Right ventricle myocardium inferior (tissue), 1 donor: ENCODE measurements at regions of chr19 and their contacts with region 1.

Region 1: GRCh38 chr19:49766007-49766937 is 529 bp upstream of the AP2A1 start:
- DNase-seq: peak; percentile 100
- ATAC-seq: peak; percentile 93

Region 2: DNA sequence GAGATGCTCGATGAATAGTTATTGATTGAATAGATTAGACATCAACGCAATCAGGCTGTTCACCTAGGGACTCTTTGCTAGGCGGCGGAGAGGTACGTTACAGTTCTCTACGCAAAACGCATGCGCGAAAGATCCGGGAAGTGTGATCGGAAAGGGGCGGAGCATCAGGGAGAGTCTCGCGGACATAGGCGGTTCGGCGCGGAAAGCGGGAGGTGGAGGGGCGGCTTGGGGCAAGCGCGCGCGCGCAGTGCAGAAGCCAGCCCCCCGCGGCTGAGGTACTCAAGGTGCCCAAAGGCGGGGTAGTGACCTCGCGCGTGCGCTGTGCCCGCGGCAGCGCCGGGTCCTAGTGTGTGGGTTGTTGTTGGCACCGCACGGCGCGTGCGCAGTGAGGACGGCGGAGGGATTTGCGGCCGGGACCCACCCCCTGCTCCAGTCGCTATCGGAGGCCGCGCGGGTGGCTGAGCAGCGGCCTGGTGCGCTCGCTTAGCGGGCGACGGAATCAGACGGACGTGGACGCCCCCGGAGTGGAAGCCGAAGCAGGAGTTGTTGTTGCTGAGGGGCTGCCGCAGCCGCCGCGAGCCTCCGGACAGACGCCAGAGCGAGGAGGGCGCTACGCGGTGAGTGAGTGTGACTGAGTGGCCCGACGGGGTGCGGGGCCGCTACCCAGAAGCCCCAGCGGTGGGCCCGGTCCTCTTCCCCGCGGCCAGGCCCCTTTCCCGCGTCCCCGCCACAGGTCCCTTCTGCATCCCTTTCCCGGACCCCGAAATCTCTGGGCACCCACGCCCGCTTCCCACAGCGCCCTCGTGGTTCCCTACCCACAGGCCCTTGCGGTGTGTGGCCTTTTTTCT is 681.0 kb before region 1 on chr19 and contains the start of gene SNRNP70:
- intact Hi-C with region 1: loop called (anchors 10 kb)
- DNase-seq: peak; percentile 100
- ATAC-seq: peak; percentile 99
- total RNA-seq, gene SNRNP70: 110 TPM

Region 3: GRCh38 chr19:49451430-49452181 is 314.7 kb before region 1 on chr19 and contains the start of gene PIH1D1:
- intact Hi-C with region 1: loop called (anchors 10 kb)
- DNase-seq: peak; percentile 98
- ATAC-seq: peak; percentile 83
- total RNA-seq, gene PIH1D1: 32.4 TPM

Region 4: GRCh38 chr19:49665351-49666119 is 100.7 kb before region 1 on chr19 and contains the starts of genes BCL2L12 and IRF3:
- intact Hi-C with region 1: no loop called
- DNase-seq: peak; percentile 99
- ATAC-seq: peak; percentile 93
- total RNA-seq, gene BCL2L12: 10.6 TPM
- total RNA-seq, gene IRF3: 36.4 TPM

Region 5: DNA sequence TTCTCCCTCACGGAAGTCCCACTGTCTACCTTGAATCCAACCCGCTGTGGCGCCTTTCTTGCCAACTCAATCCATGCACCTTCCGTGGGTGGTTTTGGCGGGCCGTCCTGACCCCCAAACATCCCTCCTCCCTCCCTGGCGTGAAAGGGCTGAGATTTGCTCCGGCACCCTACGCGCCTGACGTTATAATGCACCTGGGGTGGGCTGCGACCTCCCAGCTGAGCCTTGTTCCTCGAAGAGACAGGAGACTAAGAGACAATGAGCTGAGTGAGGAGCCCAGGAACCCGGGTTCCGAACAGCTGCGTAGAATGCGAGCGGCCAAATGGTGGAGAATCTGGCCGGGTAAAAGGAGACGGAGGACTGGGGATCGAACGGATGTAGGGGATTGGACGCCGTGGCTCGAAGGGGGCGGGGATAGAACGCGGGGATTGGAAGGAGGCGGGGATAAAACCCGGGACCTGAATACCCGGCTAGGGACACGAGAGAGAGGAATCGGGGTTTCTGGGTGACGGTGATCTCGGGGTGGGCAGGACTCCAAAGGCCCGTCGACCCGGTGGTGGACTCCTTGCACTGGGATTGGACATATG is 75.5 kb before region 1 on chr19 and contains the start of gene CPT1C:
- intact Hi-C with region 1: loop called (anchors 5 kb)
- DNase-seq: peak; percentile 87
- ATAC-seq: peak; percentile 83
- total RNA-seq, gene CPT1C: 2.9 TPM

Region 6: GRCh38 chr19:49817964-49818648 is 51.8 kb after region 1 on chr19 and contains the start of gene MED25:
- intact Hi-C with region 1: loop called (anchors 1 kb)
- DNase-seq: peak; percentile 95
- ATAC-seq: peak; percentile 73
- total RNA-seq, gene MED25: 70.4 TPM

Region 7: DNA sequence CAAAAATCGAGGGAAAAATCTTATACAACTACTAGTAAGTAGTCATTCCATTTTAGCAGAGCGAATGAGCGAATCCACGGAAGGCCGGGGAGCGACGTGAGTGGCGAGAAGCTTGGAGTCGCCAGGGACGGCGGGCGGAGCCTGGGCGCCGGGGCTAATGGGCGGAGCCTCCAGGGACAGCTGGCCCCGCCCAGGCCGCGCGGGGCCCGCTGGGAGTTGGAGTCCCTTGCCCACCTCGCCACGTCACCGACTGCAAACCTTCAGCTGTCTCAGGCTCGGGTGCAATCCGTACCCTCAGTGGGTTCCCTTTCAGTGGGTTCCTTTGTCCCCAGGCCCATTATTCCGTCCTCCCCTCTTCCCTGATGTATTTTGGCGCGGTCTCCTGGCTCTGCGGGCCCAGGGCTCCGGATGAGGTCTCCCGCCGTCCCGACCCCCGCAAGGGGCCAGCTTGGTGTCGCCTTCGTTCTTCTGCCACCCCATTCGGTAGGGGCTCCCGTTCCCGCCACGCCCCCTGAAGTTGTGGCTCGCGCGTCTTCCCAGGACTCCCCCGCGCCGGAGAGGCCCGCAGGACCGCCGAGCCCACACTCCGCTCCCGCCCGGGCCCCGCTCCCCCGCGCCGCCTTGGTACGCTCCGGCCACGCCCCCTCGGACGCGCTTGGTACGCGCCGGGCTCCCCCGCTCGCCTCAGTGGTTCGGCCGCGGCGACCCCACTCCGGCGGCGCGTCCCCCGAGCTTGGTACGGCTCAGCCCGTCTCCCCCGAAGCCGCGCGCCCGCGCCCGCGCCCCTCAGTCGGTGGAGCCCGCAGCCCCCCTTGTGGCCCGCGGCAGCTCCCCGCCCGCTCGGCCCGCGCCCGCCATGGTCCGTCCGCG is 84.4 kb after region 1 on chr19 and contains the start of gene PTOV1:
- intact Hi-C with region 1: loop called (anchors 2 kb)
- DNase-seq: peak; percentile 96
- ATAC-seq: peak; percentile 96
- total RNA-seq, gene PTOV1: 122 TPM

Region 8: GRCh38 chr19:49877020-49877878 is 111.0 kb after region 1 on chr19 and contains the starts of genes AKT1S1 and TBC1D17:
- intact Hi-C with region 1: loop called (anchors 1 kb)
- DNase-seq: peak; percentile 99
- ATAC-seq: peak; percentile 83
- total RNA-seq, gene AKT1S1: 37.2 TPM
- total RNA-seq, gene TBC1D17: 44.9 TPM